Aorta (tissue), 5 donors: ENCODE measurements at regions of chr3 and their contacts with region 1.

Region 1: GRCh38 chr3:189355481-189356201 is 183.9 kb downstream of the TPRG1 start:
- DNase-seq: no peak
- ATAC-seq: peak; percentile 57
- H3K4me3 ChIP-seq: no peak overlapping the region
- H3K27ac ChIP-seq: peak overlapping the region in 1 of 2 donors; percentile 44
- H3K4me1 ChIP-seq: peaks cover 8% of the 10 kb centered on the region in 2 donors
- H3K27me3 ChIP-seq: no peaks in the 10 kb centered on the region

Region 2: DNA sequence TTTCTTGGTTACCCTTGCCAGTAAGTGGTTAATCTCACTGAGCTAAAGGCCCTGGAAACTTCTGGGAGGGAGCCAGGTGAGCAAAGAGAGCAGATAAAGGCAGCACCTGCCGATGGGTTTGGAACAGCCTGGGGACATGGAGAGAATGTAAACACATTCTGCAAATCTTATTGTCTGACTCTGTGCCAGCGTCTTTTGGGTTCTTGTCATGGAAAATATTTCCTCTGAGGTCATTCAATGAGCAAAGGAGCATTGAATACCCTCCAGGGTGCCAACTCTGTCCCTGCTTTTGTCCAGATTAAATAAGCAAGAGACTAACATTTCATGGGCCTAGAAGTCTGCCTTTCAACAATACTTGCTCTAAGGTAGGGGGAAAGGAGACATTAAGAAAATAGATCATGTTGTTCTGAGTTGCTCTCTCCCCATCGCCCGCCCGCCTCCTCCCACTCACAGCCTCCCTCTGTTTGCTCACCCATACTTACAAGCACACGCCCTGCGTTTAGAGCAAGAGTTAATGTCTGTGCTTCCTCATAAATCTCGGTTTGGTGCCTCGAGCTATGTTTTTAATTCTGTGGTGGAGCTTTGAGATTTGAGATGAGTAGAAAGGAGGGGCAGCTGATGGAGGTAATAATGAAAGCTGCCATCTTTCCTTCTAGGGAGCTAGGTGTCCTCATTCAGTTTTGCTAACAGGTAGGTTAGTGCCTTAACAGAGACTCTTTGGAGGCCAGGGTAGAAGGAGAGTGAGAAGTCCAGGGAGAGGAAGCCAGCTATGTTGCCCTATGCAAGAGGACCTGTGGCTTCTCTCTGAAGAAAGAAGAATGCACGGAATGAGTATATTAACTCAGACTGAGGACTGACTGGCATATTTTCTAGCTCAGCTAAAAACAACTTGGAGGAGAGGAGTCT is 50.9 kb before region 1 on chr3:
- intact Hi-C with region 1: loop called in 1 of 2 experiments (anchors 10 kb)
- DNase-seq: peak; percentile 27 to 68
- ATAC-seq: peak; percentile 42
- H3K4me3 ChIP-seq: no peak overlapping the region
- H3K27ac ChIP-seq: peak overlapping the region; percentile 77 to 96
- H3K4me1 ChIP-seq: peaks cover 0 to 9% of the 10 kb centered on the region in 2 donors
- H3K27me3 ChIP-seq: no peaks in the 10 kb centered on the region

Region 3: GRCh38 chr3:189404797-189405484 is 49.3 kb after region 1 on chr3:
- intact Hi-C with region 1: no loop called
- DNase-seq: no peak
- ATAC-seq: no peak
- H3K4me3 ChIP-seq: no peak overlapping the region
- H3K27ac ChIP-seq: no peak overlapping the region
- H3K4me1 ChIP-seq: no peaks in the 10 kb centered on the region
- H3K27me3 ChIP-seq: no peaks in the 10 kb centered on the region

Region 4: GRCh38 chr3:189652042-189652441 is 296.4 kb after region 1 on chr3:
- intact Hi-C with region 1: no loop called
- DNase-seq: no peak
- ATAC-seq: no peak
- H3K4me3 ChIP-seq: no peak overlapping the region
- H3K27ac ChIP-seq: no peak overlapping the region
- H3K4me1 ChIP-seq: no peaks in the 10 kb centered on the region
- H3K27me3 ChIP-seq: no peaks in the 10 kb centered on the region